Esophagus muscularis mucosa (tissue), 4 donors: ENCODE measurements at regions of chr13 and their contacts with region 1.

Region 1: GRCh38 chr13:75482070-75482819 is at the start of gene TBC1D4:
- DNase-seq: peak; percentile 94
- H3K4me3 ChIP-seq: peak within 1 kb of the TSS; percentile 79 to 94 (median 86)
- H3K27ac ChIP-seq: peak within 1 kb of the TSS; percentile 70 to 83 (median 78)
- H3K4me1 ChIP-seq: peaks cover 0 to 32% (median 23%) of the 10 kb centered on the region in 4 donors
- H3K27me3 ChIP-seq: no peaks in the 10 kb centered on the region
- CTCF ChIP-seq: peak; percentile 75 to 86 (median 78)
- EP300 ChIP-seq: no peak
- POLR2A ChIP-seq: no peak
- total RNA-seq, gene TBC1D4: 14.2 to 32.0 (median 20.6) TPM

Region 2: DNA sequence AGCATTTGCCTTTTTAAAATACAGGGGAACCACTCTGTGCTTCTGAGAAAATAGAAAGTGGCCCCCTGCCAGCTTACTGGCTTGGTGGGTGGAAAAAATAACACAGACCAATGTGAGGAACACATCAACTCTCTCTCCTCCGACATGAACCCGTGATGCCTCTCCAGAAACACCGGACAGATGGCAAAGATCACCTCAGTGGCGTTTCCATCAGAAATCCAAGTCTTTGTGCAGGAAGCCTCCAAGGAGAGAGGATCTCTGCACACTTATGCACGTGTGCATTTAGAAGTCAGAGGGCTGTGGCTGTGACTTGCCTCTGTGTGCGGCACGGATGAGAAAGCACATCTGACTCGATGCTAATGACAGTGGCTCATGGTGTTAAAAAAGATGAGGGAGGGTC is 1235.8 kb before region 1 on chr13:
- intact Hi-C with region 1: no loop called
- DNase-seq: no peak
- H3K4me3 ChIP-seq: peak overlapping the region in 3 of 4 donors; percentile 13 to 20 (median 14)
- H3K27ac ChIP-seq: no peak overlapping the region
- H3K4me1 ChIP-seq: peaks cover 5 to 21% (median 11%) of the 10 kb centered on the region in 4 donors
- H3K27me3 ChIP-seq: no peaks in the 10 kb centered on the region
- CTCF ChIP-seq: no peak
- EP300 ChIP-seq: no peak
- POLR2A ChIP-seq: no peak

Region 3: DNA sequence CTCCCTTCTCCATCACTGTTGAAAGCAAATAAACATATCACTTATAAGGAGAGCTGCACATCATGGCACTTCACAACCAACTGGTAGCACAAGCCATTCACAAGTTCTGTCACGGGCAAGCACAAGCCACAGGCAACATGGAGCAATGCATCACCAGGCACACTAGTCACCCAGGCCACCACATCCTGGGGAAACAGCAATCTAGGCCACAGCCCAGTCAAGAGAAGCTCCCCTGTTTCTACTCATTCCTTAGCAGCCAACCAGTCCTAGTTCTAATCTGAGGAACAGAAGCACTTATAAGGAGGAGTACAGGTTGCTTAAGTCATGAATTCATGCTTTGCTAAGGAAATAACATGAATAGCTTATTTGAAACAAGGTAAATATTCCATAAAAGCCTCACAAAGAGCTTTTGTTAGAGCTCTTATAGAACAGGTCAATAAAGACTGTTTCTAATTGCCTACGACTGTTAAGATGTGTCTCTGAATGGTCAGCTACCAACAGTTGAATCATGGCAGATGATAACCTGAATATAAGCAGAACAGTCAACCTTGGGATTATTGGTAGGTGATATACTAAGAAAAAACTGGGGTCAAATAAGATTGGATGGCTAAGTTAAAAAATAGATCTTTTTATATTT is 169.2 kb before region 1 on chr13:
- intact Hi-C with region 1: no loop called
- DNase-seq: no peak
- H3K4me3 ChIP-seq: no peak overlapping the region
- H3K27ac ChIP-seq: no peak overlapping the region
- H3K4me1 ChIP-seq: peaks cover 0 to 11% (median 3%) of the 10 kb centered on the region in 4 donors
- H3K27me3 ChIP-seq: no peaks in the 10 kb centered on the region
- CTCF ChIP-seq: no peak
- EP300 ChIP-seq: no peak
- POLR2A ChIP-seq: no peak

Region 4: GRCh38 chr13:75372517-75372916 is 109.7 kb before region 1 on chr13:
- intact Hi-C with region 1: loop called (anchors 2 kb)
- DNase-seq: no peak
- H3K4me3 ChIP-seq: no peak overlapping the region
- H3K27ac ChIP-seq: peak overlapping the region; percentile 22 to 44 (median 31)
- H3K4me1 ChIP-seq: peaks cover 23 to 47% (median 41%) of the 10 kb centered on the region in 4 donors
- H3K27me3 ChIP-seq: no peaks in the 10 kb centered on the region
- CTCF ChIP-seq: peak; percentile 74 to 85 (median 77)
- EP300 ChIP-seq: no peak
- POLR2A ChIP-seq: no peak

Region 5: GRCh38 chr13:75437582-75438318 is 44.5 kb before region 1 on chr13:
- intact Hi-C with region 1: loop called (anchors 5 kb)
- DNase-seq: no peak
- H3K4me3 ChIP-seq: no peak overlapping the region
- H3K27ac ChIP-seq: no peak overlapping the region
- H3K4me1 ChIP-seq: peaks cover 27 to 37% (median 31%) of the 10 kb centered on the region in 4 donors
- H3K27me3 ChIP-seq: no peaks in the 10 kb centered on the region
- CTCF ChIP-seq: no peak
- EP300 ChIP-seq: no peak
- POLR2A ChIP-seq: no peak

Region 6: DNA sequence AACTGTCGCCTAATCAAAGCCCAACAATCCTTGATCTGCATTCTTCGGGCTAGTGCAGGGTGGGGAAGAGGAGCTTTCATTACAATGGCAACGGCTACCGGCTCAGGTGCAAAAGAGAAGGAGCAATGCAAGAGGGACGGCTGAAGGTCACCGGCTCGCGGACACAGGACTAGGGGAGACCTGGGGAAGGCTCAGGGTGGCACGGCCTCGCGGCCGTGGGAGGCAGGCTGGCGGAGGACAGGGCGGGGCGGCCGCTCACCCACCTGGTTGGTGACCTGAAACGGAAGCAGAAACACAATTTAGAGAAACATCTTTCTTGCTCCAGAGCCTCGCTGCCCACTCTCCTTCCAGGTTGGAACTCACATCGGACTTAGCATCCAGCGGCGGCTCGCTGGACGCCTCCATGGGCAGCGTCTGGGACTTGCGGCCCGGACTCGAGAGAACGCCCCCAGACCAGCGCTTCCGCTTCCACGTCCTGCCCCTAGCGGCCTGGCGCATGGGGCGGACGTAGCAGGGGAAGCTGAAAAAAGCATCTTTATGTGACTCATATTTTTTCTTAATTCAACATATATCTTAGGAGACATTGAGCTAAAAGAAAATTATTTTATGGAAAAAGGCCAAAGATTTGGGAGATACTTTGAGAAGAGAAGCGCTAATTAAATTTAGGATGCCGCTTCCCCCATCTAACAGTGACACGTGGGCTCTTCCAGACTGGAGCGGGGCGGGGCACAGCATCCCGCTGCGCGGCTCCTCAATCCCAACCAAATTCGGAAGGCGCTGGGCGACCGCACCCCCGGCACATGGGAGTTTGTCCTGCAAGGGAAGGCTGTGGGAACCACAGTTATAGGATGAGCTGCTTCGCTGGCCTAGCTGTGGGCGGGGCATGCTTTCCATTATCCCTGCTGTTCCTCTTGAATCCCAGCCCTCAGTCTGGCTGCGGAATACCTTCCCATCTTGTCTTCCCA is 55.4 kb after region 1 on chr13 and contains the start of gene COMMD6:
- intact Hi-C with region 1: loop called (anchors 5 kb)
- DNase-seq: peak; percentile 93
- H3K4me3 ChIP-seq: peak within 1 kb of the TSS; percentile 74 to 90 (median 84)
- H3K27ac ChIP-seq: peak within 1 kb of the TSS; percentile 76 to 87 (median 80)
- H3K4me1 ChIP-seq: peaks cover 9 to 39% (median 25%) of the 10 kb centered on the region in 4 donors
- H3K27me3 ChIP-seq: no peaks in the 10 kb centered on the region
- CTCF ChIP-seq: peak; percentile 37 to 87 (median 38)
- EP300 ChIP-seq: no peak
- POLR2A ChIP-seq: no peak
- total RNA-seq, gene COMMD6: 83.2 to 156 (median 109) TPM

Region 7: GRCh38 chr13:75549262-75550158 is 67.3 kb after region 1 on chr13 and contains the start of gene UCHL3:
- intact Hi-C with region 1: loop called (anchors 5 kb)
- DNase-seq: peak; percentile 97
- H3K4me3 ChIP-seq: peak within 1 kb of the TSS; percentile 73 to 97 (median 77)
- H3K27ac ChIP-seq: peak within 1 kb of the TSS; percentile 54 to 80 (median 72)
- H3K4me1 ChIP-seq: peaks cover 4 to 20% (median 17%) of the 10 kb centered on the region in 4 donors
- H3K27me3 ChIP-seq: no peaks in the 10 kb centered on the region
- CTCF ChIP-seq: peak; percentile 85 to 90 (median 87)
- EP300 ChIP-seq: no peak
- POLR2A ChIP-seq: no peak
- total RNA-seq, gene UCHL3: 11.2 to 32.3 (median 23.5) TPM